ENCODE measurements at regions of chr3 and their contacts with region 1.

Region 1: DNA sequence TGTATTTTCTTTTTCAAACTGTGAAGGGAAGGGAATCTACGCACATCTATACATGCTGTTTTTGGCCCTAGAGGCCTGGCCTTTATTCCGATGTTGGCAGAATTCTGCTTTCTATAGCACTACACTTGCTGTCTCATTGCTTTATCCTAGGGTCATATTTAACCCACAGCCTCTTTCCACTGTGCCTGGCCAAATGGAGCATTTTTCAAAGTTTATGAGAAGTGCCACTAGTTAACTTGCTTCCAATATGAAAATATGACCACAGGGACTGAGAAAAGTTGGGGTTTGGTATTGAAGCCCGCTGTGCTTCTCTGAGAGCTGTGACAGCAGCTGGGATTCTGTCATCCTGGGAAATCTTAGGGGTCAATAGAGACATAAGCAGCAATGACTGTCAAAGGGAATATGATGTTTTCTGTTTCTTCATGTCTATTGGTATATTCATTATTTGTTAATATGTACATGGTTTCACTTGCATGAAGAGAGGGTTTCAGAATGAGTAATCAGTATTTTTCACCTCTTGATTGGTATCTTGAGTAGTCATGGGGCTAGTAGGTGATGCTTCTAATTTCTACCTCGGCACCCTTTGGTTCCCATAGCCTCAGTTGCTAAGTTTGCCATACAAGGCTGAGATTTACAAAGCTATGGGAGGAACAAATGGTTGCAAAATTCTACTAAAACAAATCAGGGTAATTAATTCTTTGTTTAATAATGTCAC is 275.8 kb upstream of the RBMS3 start:
- DNase-seq: peak; percentile 35
- CTCF ChIP-seq: no peak

Region 2: DNA sequence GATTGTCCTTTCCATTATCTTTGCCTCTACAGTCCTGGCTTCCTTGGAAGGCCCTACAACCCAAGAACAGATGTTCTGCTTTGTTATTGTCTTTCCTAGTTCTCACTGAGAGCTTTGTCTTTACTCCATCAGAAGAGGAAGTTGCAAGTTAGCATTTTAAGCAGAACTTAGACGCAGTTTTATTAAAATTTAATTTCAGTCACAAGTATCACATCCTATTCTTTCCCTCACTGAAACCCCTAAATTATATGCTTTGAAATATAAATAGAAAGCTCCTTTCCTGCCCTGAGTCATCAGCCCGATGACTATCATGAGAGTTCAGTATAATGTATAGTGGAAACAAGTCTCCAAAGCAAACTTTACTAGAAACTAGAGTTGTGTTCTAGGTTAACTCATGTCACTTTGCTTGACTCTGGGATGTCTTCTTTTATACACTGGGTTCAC is 15.4 kb before region 1 on chr3:
- CTCF ChIA-PET with region 1: interaction called, 11 read pairs
- POLR2A ChIA-PET with region 1: no interaction called
- DNase-seq: peak; percentile 13
- CTCF ChIP-seq: no peak

Region 3: GRCh38 chr3:29083676-29084075 is 78.6 kb after region 1 on chr3:
- CTCF ChIA-PET with region 1: no interaction called
- POLR2A ChIA-PET with region 1: no interaction called
- DNase-seq: no peak
- CTCF ChIP-seq: no peak

Region 4: DNA sequence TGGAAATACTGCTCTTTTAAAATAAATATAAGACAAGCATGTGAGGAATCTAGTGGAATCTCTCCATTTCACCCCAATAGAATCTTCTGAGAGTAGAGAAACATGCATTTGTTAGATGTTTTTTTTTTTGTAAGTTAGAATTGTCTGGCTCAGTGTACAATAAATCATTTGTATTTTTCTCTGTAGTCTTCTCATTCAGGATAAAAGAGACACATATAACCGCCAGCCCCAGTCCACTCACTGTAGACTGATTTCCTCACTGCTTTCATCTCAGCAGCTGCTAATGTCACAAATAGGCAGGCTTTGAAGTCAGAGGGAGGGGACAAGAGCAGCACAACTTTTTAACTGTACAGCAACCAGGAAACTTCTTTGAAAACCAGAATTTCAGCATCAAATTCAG is 135.6 kb after region 1 on chr3:
- CTCF ChIA-PET with region 1: no interaction called
- POLR2A ChIA-PET with region 1: no interaction called
- DNase-seq: no peak
- CTCF ChIP-seq: no peak

Region 5: GRCh38 chr3:29353807-29354206 is 348.8 kb after region 1 on chr3:
- CTCF ChIA-PET with region 1: no interaction called
- POLR2A ChIA-PET with region 1: no interaction called
- DNase-seq: peak; percentile 6
- CTCF ChIP-seq: no peak

Measured in GM10248 (cell line).